Activated CD4-positive, alpha-beta memory T cell treated with anti-CD3 and anti-CD28 coated beads for 36 hours (primary cell): ENCODE measurements at regions of chr3 and their contacts with region 1.

Region 1: DNA sequence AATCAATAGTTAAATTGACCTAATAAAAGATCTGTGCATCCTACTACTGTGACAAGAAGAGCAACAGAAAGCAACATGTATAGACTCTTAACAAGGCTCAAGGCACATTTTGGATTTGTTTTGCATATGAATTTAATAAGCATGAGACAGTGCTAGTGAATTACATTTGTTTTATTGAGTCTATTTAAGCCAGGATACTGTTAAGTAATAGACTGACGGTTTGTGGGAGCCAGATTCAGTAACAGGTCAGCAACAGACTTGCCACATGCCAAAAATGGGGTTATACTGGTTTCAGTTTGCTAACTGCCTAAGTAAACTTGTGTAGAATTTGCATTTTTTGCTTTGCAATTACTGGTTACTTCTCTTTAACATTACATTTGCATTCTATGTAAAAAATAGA is 54.0 kb downstream of the MBNL1 start:
- DNase-seq: no peak
- H3K4me3 Mint-ChIP-seq: no peak overlapping the region
- H3K27ac Mint-ChIP-seq: peak overlapping the region; percentile 24
- H3K4me1 Mint-ChIP-seq: peaks cover 82% of the 10 kb centered on the region
- H3K27me3 Mint-ChIP-seq: no peaks in the 10 kb centered on the region

Region 2: DNA sequence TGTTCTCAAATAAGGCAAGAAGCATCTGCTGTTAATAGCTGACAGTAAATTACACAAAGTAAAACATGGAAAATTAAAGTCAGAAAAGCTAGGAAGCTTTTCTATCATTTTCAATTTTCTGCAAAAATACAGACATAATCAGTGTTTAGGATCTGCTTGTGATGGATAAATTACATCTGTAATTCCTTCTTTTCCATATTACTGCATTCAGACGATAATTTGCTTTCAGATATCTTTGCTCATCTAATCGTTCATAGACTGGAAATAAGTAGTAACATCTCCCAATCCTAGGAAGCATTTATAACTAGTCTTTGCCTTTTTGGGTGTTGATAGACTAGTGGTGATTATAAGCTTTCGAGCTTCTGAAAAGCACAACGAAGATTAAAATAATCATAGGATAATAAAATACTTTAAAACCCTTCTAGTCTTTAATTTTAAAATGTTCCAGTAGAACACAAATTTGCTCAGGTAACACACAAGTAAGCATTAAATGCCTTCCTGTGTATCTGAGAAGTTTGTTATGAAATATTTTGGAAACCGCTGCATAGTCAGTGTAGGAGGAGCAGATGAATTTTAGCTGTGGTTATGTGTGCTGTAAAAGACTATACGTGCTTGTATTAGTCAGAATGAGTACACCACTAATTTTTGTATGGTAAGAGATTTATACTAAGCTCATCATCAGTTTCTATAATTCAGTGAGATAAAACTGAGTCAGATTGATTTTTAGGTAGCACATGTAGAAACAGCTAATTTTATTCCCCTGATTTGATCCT is 13.0 kb before region 1 on chr3:
- CTCF ChIA-PET with region 1: interaction called, 6 read pairs
- POLR2A ChIA-PET with region 1: interaction called, 7 read pairs
- intact Hi-C with region 1: loop called (anchors 1 kb)
- DNase-seq: no peak
- H3K4me3 Mint-ChIP-seq: no peak overlapping the region
- H3K27ac Mint-ChIP-seq: peak overlapping the region; percentile 65
- H3K4me1 Mint-ChIP-seq: peaks cover 73% of the 10 kb centered on the region
- H3K27me3 Mint-ChIP-seq: no peaks in the 10 kb centered on the region